AG04449 (cell line): ENCODE measurements at regions of chr12 and their contacts with region 1.

Region 1: GRCh38 chr12:75334384-75335030 is at the start of gene GLIPR1L1:
- DNase-seq: peak; percentile 53
- H3K4me3 ChIP-seq: peak within 1 kb of the TSS; percentile 62
- CTCF ChIP-seq: peak; percentile 84

Region 2: GRCh38 chr12:75322464-75322863 is 12.0 kb before region 1 on chr12:
- CTCF ChIA-PET with region 1: interaction called, 24 read pairs
- POLR2A ChIA-PET with region 1: no interaction called
- DNase-seq: peak; percentile 82
- H3K4me3 ChIP-seq: no peak overlapping the region
- CTCF ChIP-seq: no peak

Region 3: GRCh38 chr12:75505706-75506312 is 171.3 kb after region 1 on chr12:
- CTCF ChIA-PET with region 1: interaction called, 40 read pairs
- POLR2A ChIA-PET with region 1: no interaction called
- DNase-seq: no peak
- H3K4me3 ChIP-seq: no peak overlapping the region
- CTCF ChIP-seq: peak; percentile 41